ENCODE measurements at regions of chr7 and their contacts with region 1.

Region 1: DNA sequence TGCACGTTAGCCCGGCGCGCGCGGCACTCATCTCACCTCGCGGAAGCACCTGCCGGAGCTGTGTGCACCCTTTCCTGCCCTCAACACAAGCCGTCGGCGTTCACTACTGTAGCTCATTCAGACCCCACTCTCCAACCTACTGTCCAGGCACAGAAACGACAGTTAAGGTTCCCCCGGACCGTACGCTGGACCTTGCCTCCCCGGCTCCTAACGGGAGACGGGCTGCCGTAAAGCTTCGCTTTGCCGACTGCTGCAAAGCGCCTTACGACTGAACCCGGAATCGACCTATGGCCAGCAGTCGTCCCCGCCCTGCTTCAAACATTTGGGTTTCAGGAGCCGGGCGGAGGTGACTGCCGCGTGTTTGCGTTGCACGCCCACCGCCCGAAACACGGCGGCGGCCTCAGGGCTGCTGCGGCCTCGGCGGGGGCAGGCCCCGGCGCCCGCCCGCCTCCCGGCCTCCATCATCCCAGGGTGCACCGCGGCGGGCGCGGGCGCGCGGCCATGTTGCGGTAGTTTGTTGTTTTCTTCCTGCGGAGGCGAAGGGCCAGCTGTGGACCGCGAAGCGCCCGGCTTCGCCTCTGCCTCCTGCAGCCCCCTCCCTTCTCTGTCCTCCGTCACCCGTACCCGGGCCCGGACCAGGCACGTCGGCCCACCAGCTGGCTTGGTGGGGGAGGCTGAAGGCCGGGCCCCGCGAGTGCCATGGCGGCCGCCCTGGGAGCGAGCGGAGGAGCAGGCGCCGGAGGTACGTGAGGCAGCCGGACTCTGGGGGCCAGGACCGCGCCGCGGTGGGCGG is at the start of gene RBM33:
- DNase-seq: peak; percentile 79
- H3K4me3 Mint-ChIP-seq: peak within 1 kb of the TSS; percentile 99
- H3K27ac Mint-ChIP-seq: peak within 1 kb of the TSS; percentile 100
- H3K4me1 Mint-ChIP-seq: peaks cover 26% of the 10 kb centered on the region
- H3K27me3 Mint-ChIP-seq: no peaks in the 10 kb centered on the region
- total RNA-seq, gene RBM33: 79.8 and 80.3 TPM in 2 replicates

Region 2: DNA sequence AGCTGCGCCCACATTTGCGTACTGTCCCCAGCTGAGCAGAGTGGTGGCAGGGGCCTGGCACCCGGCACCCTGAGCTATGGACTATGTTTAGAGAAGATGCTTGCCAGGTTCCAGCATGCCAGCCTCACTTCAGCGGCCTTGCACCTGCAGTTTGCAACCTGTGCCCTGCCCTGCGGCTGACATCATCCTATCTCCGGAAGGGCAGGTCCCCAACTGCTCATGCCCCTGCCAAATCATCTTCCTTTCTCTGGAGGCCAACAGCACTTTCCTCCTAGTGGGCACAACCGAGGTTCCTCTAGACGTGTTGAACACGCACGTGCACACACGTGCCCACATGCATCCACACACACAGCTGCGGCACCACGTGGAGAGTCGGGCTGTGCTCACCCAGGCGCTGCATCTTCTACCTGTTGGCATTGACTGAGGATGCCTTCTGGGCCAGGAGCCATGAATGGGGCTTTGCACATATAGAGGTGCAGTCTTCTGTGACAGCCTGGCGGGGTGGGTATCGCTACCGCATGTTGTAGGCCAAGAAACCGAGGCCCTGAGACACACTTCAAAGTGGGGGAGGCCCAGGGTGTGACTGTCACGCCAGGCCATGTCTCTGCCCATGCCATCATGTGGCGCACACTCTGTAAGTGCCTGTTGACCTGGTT is 122.5 kb before region 1 on chr7:
- intact Hi-C with region 1: no loop called
- DNase-seq: no peak
- H3K4me3 Mint-ChIP-seq: no peak overlapping the region
- H3K27ac Mint-ChIP-seq: no peak overlapping the region
- H3K4me1 Mint-ChIP-seq: no peaks in the 10 kb centered on the region
- H3K27me3 Mint-ChIP-seq: peaks cover 24% of the 10 kb centered on the region

Region 3: DNA sequence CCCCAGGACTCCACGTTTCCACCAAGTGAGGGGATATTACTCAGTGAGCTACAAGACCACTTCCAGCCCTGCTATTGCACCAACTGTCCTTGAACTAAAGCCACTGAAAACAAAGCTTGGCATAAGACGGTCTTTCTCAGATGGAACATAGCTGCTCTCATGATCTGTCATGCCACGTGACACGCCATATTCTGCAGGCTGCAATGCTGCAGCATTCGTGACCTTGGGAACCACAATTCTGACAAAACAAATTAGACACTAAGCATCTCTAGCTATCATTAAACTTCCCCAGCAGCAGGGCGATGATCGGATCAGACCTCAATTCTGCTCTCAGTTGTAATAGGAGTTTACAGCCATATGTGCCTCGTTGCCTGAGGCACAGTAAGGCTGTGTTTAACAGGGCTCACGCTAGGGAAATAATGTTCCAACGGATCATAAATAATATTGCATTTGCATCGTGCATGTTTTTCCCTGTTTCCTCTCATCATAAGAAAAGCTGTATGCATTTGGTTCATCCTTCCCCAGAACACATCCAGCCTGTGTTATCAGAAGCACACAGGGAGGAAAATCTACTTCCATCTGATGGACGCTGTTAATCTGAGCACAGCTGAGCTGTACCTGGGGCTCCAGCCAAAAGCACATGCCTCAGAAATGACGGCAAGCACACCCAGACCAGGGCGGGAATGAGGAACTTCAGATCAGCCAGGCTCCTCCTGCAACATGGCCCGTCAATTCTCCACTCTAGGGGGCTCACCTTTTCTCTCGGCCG is 59.4 kb before region 1 on chr7:
- intact Hi-C with region 1: loop called (anchors 5 kb)
- DNase-seq: no peak
- H3K4me3 Mint-ChIP-seq: no peak overlapping the region
- H3K27ac Mint-ChIP-seq: no peak overlapping the region
- H3K4me1 Mint-ChIP-seq: peaks cover 9% of the 10 kb centered on the region
- H3K27me3 Mint-ChIP-seq: peaks cover 37% of the 10 kb centered on the region

Region 4: GRCh38 chr7:155681663-155682062 is 37.3 kb after region 1 on chr7:
- intact Hi-C with region 1: loop called (anchors 5 kb)
- DNase-seq: no peak
- H3K4me3 Mint-ChIP-seq: no peak overlapping the region
- H3K27ac Mint-ChIP-seq: no peak overlapping the region
- H3K4me1 Mint-ChIP-seq: peaks cover 31% of the 10 kb centered on the region
- H3K27me3 Mint-ChIP-seq: no peaks in the 10 kb centered on the region

Region 5: DNA sequence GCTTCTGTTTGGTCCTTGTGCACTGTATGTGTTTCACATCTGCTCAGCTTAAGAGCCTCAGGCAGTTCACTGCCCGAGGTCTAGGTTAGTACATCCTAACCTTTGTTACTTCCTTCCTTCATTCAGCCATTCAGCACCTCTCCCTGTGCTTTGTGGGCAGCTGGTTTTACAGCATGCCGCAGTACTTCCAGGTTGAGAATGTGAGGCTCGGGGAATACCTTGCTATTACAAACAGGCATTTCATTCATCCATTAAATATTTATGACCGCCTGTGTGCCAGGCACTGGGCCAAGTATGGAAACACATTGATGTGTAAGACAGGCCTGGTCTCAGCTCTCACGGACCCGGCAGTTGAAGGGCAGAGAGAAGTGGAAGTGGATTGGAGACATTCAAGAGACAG is 85.5 kb after region 1 on chr7:
- intact Hi-C with region 1: loop called (anchors 5 kb)
- DNase-seq: no peak
- H3K4me3 Mint-ChIP-seq: no peak overlapping the region
- H3K27ac Mint-ChIP-seq: no peak overlapping the region
- H3K4me1 Mint-ChIP-seq: peaks cover 30% of the 10 kb centered on the region
- H3K27me3 Mint-ChIP-seq: no peaks in the 10 kb centered on the region

Region 6: GRCh38 chr7:157138424-157139110 is 1494.2 kb after region 1 on chr7 and contains the start of gene UBE3C:
- intact Hi-C with region 1: loop called (anchors 5 kb)
- DNase-seq: peak; percentile 89
- H3K4me3 Mint-ChIP-seq: peak within 1 kb of the TSS; percentile 87
- H3K27ac Mint-ChIP-seq: peak within 1 kb of the TSS; percentile 96
- H3K4me1 Mint-ChIP-seq: peaks cover 32% of the 10 kb centered on the region
- H3K27me3 Mint-ChIP-seq: no peaks in the 10 kb centered on the region
- total RNA-seq, gene UBE3C: 84.9 and 85.7 TPM in 2 replicates